Mucosa of descending colon (tissue), 3 donors: ENCODE measurements at regions of chr19 and their contacts with region 1.

Region 1: GRCh38 chr19:28324275-28325060 is 888.5 kb downstream of the UQCRFS1 start:
- DNase-seq: no peak
- ATAC-seq: no peak
- H3K4me3 ChIP-seq: no peak overlapping the region
- H3K4me1 ChIP-seq: peaks cover 7% of the 10 kb centered on the region
- CTCF ChIP-seq: no peak

Region 2: DNA sequence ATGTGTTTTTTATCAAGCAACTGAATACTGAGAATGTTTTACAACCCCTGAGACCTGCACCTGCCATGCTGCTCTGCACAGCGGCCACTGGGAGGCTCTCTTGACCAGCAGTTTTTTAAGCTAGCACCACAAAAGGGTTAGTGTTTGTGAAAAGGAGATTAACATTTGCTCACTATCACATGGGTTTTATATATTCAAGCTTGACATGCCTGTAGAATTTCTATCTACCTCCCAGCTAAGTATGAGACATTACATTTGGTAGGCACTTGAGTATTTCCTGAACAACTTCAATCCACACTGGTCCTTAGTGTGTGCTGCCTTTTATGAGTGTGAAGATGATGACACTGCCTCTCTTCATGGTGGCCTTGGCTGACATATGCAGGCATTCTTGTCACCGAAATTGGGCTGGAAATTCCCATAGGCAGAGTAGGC is 350.4 kb before region 1 on chr19:
- intact Hi-C with region 1: loop called (anchors 5 kb)
- DNase-seq: peak in 2 of 3 donors; percentile 21 to 36
- ATAC-seq: peak; percentile 64
- H3K4me3 ChIP-seq: no peak overlapping the region
- H3K4me1 ChIP-seq: no peaks in the 10 kb centered on the region
- CTCF ChIP-seq: no peak

Region 3: DNA sequence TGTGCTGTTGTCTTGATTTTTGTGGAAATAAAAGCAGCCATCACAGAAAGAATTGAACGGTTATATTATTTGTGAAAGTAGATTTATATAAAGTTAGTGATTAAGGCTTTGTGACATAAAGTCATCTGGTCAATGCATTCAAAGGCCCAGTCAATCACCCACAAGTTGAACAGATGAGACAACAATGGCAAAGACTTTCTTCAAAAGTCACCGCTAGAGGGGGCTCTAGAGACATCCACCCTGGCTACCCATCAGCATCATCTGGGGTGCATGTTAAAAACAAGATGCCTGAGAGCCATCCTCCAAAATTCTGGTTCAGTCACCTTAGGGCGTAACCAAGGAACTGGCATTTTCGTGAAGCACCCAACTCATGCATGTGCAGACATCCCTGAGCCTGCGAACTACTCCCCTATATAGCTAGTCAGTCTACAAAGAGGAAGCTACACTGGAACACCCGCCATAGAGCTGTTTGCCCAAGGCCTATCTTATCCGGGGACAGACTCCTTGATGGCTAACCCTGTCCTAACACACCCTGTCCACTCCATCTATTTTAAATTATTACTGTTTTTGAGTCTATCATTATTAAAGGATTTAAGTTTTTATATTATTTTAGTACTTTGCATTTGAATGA is 82.1 kb before region 1 on chr19:
- intact Hi-C with region 1: loop called in 1 of 2 experiments (anchors 5 kb)
- DNase-seq: peak in 1 of 3 donors; percentile 69
- ATAC-seq: peak; percentile 49
- H3K4me3 ChIP-seq: no peak overlapping the region
- H3K4me1 ChIP-seq: no peaks in the 10 kb centered on the region
- CTCF ChIP-seq: no peak

Region 4: DNA sequence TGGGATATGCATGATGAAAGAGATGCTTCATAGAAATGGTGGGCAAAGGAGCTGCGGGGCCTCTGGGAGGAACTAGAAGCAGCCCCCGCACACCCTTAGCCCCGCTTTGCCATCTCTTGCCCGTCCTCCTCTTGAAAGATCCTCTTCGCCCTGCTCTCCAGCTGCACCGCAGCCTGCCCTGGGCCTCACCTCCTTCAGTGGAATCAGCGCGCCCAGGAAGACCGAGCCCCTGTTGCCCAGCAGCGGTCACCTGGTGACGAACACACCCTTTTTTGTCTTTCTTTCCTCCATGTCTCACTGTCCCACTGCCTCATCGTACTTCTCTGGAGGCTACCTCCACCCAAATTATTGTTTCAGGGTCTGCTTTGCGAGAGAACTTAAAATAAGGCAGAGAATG is 80.9 kb after region 1 on chr19:
- intact Hi-C with region 1: no loop called
- DNase-seq: peak; percentile 56 to 67 (median 67)
- ATAC-seq: peak; percentile 71
- H3K4me3 ChIP-seq: no peak overlapping the region
- H3K4me1 ChIP-seq: peaks cover 16% of the 10 kb centered on the region
- CTCF ChIP-seq: no peak

Region 5: GRCh38 chr19:28466107-28467045 is 141.9 kb after region 1 on chr19:
- intact Hi-C with region 1: no loop called
- DNase-seq: peak in 2 of 3 donors; percentile 79 to 95
- ATAC-seq: peak; percentile 47
- H3K4me3 ChIP-seq: no peak overlapping the region
- H3K4me1 ChIP-seq: peaks cover 13% of the 10 kb centered on the region
- CTCF ChIP-seq: peak; percentile 71

Region 6: GRCh38 chr19:28606269-28607032 is 282.0 kb after region 1 on chr19:
- intact Hi-C with region 1: no loop called
- DNase-seq: no peak
- ATAC-seq: no peak
- H3K4me3 ChIP-seq: no peak overlapping the region
- H3K4me1 ChIP-seq: no peaks in the 10 kb centered on the region
- CTCF ChIP-seq: no peak